ENCODE measurements at regions of chr15 and their contacts with region 1.

Region 1: DNA sequence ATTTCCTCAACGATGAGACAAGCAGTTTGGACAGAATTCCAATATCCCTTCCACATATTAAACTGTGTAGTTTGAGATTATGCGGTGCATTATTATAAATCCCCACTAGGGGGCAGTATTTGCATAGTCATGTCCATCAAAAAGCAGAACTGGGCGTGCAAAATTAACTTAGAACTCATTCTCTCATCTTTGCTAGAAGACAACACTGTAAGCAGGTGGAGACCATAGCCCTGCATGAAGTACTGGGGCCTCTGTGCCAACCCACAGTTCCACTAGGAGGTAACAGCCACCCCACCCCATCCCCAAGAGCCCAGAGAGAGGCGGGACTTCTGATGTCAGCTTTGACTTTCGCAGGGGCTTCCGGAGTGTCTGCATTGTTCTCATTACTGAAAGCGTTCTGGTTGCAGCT is 106.6 kb upstream of the TMC3 start:
- DNase-seq: no peak
- ATAC-seq: peak; percentile 82
- H3K4me3 ChIP-seq: no peak overlapping the region
- H3K27ac ChIP-seq: no peak overlapping the region
- H3K4me1 ChIP-seq: no peaks in the 10 kb centered on the region
- H3K27me3 ChIP-seq: no peaks in the 10 kb centered on the region

Region 2: GRCh38 chr15:81419332-81419943 is 61.2 kb before region 1 on chr15:
- intact Hi-C with region 1: no loop called
- DNase-seq: no peak
- ATAC-seq: no peak
- H3K4me3 ChIP-seq: no peak overlapping the region
- H3K27ac ChIP-seq: no peak overlapping the region
- H3K4me1 ChIP-seq: no peaks in the 10 kb centered on the region
- H3K27me3 ChIP-seq: no peaks in the 10 kb centered on the region

Region 3: DNA sequence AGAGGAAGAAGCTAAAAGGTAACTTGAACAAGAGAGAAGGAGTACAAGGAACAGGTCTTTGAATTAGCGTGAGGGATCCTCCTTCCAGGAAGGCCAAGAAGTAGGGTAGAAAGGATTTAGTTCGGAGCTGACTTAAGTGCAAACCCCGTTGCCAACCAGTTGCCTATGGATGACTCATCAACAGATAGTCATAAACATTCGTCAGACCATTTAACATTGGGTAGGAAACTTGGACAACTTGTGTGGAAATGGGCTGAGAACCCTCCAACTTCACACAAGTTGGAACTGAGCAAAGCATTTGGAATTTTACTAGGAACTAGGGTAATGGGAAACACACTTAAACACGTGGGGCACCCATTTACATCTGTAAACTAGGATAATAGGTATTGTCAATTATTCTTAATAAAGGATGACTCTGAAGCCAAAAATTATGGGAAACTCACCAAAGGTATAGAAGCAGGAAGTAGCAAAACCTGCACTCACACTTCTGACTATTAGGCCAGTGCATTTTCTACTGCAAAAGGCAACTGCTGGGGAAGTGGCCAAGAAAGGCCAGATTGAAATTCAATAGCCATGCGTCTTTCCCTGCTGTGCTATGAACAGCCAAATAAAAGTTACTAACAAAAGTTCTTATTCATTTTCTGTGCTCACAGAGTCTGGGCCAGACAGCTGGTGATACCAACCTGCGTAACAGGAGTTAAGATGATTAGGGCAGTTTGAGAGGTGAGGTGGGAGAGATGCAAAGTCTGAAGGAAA is 67.9 kb after region 1 on chr15:
- intact Hi-C with region 1: no loop called
- DNase-seq: no peak
- ATAC-seq: no peak
- H3K4me3 ChIP-seq: no peak overlapping the region
- H3K27ac ChIP-seq: no peak overlapping the region
- H3K4me1 ChIP-seq: no peaks in the 10 kb centered on the region
- H3K27me3 ChIP-seq: no peaks in the 10 kb centered on the region

Region 4: GRCh38 chr15:82046666-82047452 is 566.2 kb after region 1 on chr15:
- intact Hi-C with region 1: loop called (anchors 5 kb)
- DNase-seq: peak; percentile 94 to 95
- ATAC-seq: peak; percentile 89
- H3K4me3 ChIP-seq: peak overlapping the region; percentile 65 to 69
- H3K27ac ChIP-seq: peak overlapping the region in 1 of 2 donors; percentile 50
- H3K4me1 ChIP-seq: no peaks in the 10 kb centered on the region
- H3K27me3 ChIP-seq: no peaks in the 10 kb centered on the region

Region 5: DNA sequence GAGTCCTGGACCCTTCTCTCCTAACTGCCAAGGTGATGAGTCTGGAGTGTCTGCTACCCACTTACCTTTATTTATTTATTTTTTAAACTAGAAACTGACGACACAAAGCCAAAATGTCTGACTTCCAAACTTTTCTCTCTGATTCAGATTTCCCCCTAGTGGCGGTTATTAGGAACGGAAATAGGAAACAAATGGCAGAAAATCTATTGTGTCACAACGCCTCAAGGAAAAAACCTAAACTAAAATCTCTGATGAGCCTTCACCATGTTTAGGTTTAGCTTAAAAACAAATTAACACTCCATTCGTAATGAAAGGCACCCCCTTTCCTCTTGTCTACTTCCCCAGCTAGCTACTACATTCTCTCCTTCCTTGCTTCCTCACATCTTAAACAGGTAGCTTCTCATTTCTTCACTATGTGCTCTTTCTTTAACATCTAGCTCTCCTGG is 659.2 kb after region 1 on chr15:
- intact Hi-C with region 1: loop called in 1 of 2 experiments (anchors 2 kb)
- DNase-seq: no peak
- ATAC-seq: no peak
- H3K4me3 ChIP-seq: no peak overlapping the region
- H3K27ac ChIP-seq: no peak overlapping the region
- H3K4me1 ChIP-seq: no peaks in the 10 kb centered on the region
- H3K27me3 ChIP-seq: no peaks in the 10 kb centered on the region

Region 6: GRCh38 chr15:82197733-82198594 is 717.3 kb after region 1 on chr15:
- intact Hi-C with region 1: loop called (anchors 5 kb)
- DNase-seq: peak in 1 of 2 donors; percentile 65
- ATAC-seq: peak; percentile 81
- H3K4me3 ChIP-seq: no peak overlapping the region
- H3K27ac ChIP-seq: no peak overlapping the region
- H3K4me1 ChIP-seq: peaks cover 0 to 2% of the 10 kb centered on the region in 2 donors
- H3K27me3 ChIP-seq: no peaks in the 10 kb centered on the region

Measured in aorta (tissue), 5 donors.